Activated CD8-positive, alpha-beta memory T cell treated with anti-CD3 and anti-CD28 coated beads, Interleukin-2, amount 10 ng/mL, durations not matched to agents 7 days and 5 days (primary cell): ENCODE measurements at regions of chr16 and their contacts with region 1.

Region 1: DNA sequence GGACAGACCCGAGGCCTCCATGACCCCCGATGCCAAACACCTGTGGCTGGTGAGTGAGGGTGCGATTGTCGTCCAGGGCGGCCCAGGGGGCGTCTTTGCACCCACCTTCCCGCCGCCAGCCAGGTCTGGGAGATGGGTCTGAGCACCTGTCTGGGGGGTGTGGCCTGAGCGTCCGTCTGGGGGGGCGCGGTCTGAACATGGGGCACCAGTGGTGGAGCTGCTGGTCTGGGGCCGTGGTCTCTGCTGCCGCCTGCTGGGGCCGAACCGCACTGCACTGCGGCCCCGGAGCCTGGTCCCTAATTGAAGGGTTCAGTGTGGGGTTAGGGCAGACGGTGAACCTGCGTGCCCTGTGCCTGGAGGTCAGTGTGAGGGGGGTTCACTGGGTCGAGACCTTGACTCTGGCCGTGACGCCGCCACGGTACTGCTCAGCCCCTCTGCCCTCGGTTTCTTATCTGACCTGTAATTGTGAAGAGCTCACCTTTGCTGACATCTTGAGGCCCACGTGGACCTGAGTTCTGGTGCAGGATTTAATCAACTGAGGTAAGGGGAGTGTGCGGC is 12.6 kb upstream of the TCF25 start:
- DNase-seq: peak; percentile 83
- ATAC-seq: peak; percentile 87
- H3K4me3 Mint-ChIP-seq: no peak overlapping the region
- H3K27ac Mint-ChIP-seq: no peak overlapping the region
- H3K4me1 Mint-ChIP-seq: peaks cover 27% of the 10 kb centered on the region
- H3K27me3 Mint-ChIP-seq: peaks cover 14% of the 10 kb centered on the region

Region 2: DNA sequence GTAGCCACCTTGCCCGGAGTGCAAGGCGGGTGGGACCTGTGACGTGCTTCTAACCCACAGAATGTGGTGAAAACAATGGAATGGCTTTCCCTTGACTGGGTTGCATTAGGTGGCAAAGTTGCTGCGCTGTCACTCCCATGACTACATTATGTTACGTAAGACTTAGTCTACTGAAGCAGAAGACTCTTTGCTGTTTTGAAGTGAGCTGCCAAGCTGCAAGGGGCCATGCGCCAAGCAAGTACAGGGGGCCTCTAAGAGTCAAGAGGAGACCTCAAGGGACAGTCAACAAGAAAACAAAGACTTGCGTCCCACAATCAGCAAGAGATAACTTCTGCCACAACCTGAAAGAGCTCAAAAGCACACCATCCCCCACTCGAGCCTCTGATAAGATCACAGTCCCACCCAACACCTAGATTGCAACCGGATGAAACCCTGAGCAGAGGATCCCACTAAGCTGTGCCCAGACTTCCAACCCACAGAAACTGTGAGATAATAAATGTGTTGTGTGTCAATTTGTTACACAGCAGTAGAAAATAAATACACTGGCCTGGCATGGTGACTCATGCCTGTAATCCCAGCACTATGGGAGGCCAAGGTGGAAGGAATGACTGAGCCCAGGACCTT is 386.9 kb before region 1 on chr16:
- CTCF ChIA-PET with region 1: no interaction called
- DNase-seq: no peak
- ATAC-seq: peak; percentile 43
- H3K4me3 Mint-ChIP-seq: no peak overlapping the region
- H3K27ac Mint-ChIP-seq: peak overlapping the region; percentile 61
- H3K4me1 Mint-ChIP-seq: peaks cover 78% of the 10 kb centered on the region
- H3K27me3 Mint-ChIP-seq: no peaks in the 10 kb centered on the region

Region 3: GRCh38 chr16:89706507-89707263 is 154.1 kb before region 1 on chr16:
- CTCF ChIA-PET with region 1: interaction called, 93 read pairs
- DNase-seq: no peak
- ATAC-seq: no peak
- H3K4me3 Mint-ChIP-seq: no peak overlapping the region
- H3K27ac Mint-ChIP-seq: no peak overlapping the region
- H3K4me1 Mint-ChIP-seq: peaks cover 11% of the 10 kb centered on the region
- H3K27me3 Mint-ChIP-seq: no peaks in the 10 kb centered on the region

Region 4: DNA sequence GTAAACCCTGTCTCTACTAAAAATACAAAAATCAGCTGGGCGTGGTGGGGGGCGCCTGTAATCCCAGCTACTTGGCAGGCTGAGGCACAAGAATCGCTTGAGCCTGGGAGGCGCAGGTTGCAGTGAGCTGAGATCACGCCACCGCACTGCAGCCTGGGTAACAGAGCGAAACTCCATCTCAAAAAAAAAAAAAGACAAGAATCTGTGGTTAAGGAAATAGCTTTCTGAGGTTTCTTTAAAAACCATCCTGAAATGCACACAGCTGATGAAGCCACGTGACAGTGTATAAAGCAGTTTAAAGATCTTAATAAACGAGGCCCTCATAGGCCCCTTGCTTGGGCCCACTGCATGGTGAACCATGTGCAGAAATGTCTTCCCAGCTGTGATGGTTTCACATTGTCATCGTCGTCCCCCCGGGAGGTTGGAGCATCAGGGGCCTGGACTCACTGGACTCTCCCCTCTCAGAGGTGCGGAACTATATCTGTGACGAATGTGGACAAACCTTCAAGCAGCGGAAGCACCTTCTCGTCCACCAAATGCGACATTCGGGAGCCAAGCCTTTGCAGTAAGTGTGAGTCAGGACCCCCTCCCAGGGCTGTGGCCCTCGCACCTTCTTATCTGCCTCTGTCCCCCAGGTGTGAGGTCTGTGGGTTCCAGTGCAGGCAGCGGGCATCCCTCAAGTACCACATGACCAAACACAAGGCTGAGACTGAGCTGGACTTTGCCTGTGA is 123.3 kb before region 1 on chr16:
- CTCF ChIA-PET with region 1: interaction called, 14 read pairs
- DNase-seq: peak; percentile 77
- ATAC-seq: peak; percentile 70
- H3K4me3 Mint-ChIP-seq: no peak overlapping the region
- H3K27ac Mint-ChIP-seq: peak overlapping the region; percentile 79
- H3K4me1 Mint-ChIP-seq: peaks cover 24% of the 10 kb centered on the region
- H3K27me3 Mint-ChIP-seq: no peaks in the 10 kb centered on the region

Region 5: DNA sequence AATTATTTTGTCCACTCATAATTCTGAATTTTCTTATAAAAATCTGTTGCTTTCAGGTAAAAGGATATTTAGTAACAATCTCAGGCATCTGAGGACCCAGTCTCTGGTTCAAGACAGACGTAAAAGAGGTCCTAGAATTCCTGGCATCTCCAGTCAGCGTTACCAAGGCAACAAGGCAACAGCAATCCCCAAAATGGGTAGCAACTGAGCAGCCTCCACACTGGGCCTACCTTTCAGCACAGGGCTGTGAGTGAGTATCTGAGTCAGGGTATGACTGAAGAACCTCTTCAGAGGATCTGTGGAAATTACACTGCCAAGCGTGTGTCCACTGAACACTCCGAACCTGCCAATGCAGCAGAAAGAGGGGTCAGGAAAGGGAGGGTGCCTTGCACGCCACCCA is 65.2 kb before region 1 on chr16:
- CTCF ChIA-PET with region 1: interaction called, 26 read pairs
- DNase-seq: no peak
- ATAC-seq: no peak
- H3K4me3 Mint-ChIP-seq: no peak overlapping the region
- H3K27ac Mint-ChIP-seq: no peak overlapping the region
- H3K4me1 Mint-ChIP-seq: peaks cover 3% of the 10 kb centered on the region
- H3K27me3 Mint-ChIP-seq: no peaks in the 10 kb centered on the region

Region 6: GRCh38 chr16:89842471-89843408 is 18.1 kb before region 1 on chr16:
- CTCF ChIA-PET with region 1: interaction called, 32 read pairs
- DNase-seq: no peak
- ATAC-seq: no peak
- H3K4me3 Mint-ChIP-seq: no peak overlapping the region
- H3K27ac Mint-ChIP-seq: no peak overlapping the region
- H3K4me1 Mint-ChIP-seq: peaks cover 47% of the 10 kb centered on the region
- H3K27me3 Mint-ChIP-seq: peaks cover 47% of the 10 kb centered on the region

Region 7: GRCh38 chr16:89953671-89954419 is 93.0 kb after region 1 on chr16:
- CTCF ChIA-PET with region 1: no interaction called
- DNase-seq: no peak
- ATAC-seq: no peak
- H3K4me3 Mint-ChIP-seq: no peak overlapping the region
- H3K27ac Mint-ChIP-seq: no peak overlapping the region
- H3K4me1 Mint-ChIP-seq: peaks cover 9% of the 10 kb centered on the region
- H3K27me3 Mint-ChIP-seq: peaks cover 2% of the 10 kb centered on the region